Caco-2 (cell line): ENCODE measurements at regions of chr12 and their contacts with region 1.

Region 1: GRCh38 chr12:75990189-75990912 is 41.2 kb downstream of the PHLDA1 start:
- DNase-seq: peak in 1 of 2 experiments; percentile 77
- H3K4me3 ChIP-seq: no peak overlapping the region
- H3K4me3 Mint-ChIP-seq: peak overlapping the region; percentile 18
- H3K27ac Mint-ChIP-seq: peak overlapping the region; percentile 89
- H3K4me1 ChIP-seq: peaks cover 79% of the 10 kb centered on the region
- H3K4me1 Mint-ChIP-seq: peaks cover 46% of the 10 kb centered on the region
- H3K27me3 ChIP-seq: no peaks in the 10 kb centered on the region
- H3K27me3 Mint-ChIP-seq: no peaks in the 10 kb centered on the region
- CTCF ChIP-seq: no peak

Region 2: DNA sequence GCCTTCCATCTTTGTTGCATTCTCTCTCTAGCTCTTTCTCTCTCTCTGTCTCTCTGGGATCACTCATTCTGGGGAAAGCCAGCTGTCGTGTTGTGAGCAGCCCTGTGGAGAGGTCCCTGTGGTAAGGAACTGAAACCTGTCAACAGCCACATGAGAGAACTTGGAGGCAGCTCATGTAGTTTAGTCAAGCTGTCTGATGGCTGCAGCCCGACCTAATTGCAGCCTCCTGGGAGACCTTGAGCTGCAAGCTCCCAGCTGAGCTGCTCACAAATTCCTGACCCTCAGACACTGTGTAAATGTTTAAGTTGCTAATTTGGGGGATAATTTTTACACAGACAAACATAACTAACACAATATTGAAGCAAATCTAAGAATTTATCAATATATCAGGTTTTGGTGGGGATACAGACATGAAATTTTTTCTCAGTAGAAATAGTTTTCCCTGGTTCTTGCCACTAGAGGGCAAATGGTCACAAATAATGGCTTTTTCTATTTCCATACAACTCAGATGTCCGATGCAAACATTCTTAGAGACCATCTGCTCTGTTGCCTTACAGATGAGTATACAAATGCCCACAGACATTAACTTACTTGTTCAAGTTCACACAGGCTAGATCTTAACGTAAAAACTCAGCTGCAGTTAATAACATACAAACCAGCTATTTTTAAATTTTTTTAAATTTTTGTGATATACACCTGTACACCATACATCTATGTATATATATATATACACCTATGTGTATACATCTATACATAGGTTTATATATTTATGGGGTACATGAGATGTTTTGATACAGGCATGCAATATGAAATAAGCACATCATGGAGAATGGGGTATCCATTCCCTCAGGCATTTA is 463.5 kb before region 1 on chr12:
- CTCF ChIA-PET with region 1: no interaction called
- POLR2A ChIA-PET with region 1: no interaction called
- intact Hi-C with region 1: loop called (anchors 1 kb)
- DNase-seq: peak; percentile 28 to 37
- H3K4me3 ChIP-seq: no peak overlapping the region
- H3K4me3 Mint-ChIP-seq: no peak overlapping the region
- H3K27ac Mint-ChIP-seq: no peak overlapping the region
- H3K4me1 ChIP-seq: no peaks in the 10 kb centered on the region
- H3K4me1 Mint-ChIP-seq: peaks cover 17% of the 10 kb centered on the region
- H3K27me3 ChIP-seq: no peaks in the 10 kb centered on the region
- H3K27me3 Mint-ChIP-seq: peaks cover 2% of the 10 kb centered on the region
- CTCF ChIP-seq: peak; percentile 75 to 77

Region 3: DNA sequence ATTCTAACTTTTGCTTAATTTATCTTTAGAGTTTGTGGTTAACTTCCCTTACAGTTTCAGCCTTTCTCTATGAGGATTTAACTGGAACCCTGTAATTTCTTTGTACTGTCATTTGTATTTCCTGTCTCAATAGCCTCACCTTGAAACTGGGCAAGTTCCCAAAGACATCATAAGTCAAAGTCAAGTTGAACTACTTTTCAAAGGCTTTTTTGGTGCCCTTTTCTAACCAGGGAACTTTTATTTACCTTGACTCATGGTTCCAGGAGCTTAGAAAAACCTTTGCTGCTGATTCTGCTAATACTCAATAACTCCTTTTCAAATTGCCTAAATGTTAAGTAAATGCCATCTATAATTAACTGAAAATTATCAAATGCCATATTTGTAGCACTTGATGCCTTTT is 278.1 kb before region 1 on chr12:
- CTCF ChIA-PET with region 1: no interaction called
- POLR2A ChIA-PET with region 1: no interaction called
- intact Hi-C with region 1: loop called (anchors 1 kb)
- DNase-seq: no peak
- H3K4me3 ChIP-seq: no peak overlapping the region
- H3K4me3 Mint-ChIP-seq: no peak overlapping the region
- H3K27ac Mint-ChIP-seq: no peak overlapping the region
- H3K4me1 ChIP-seq: peaks cover 28% of the 10 kb centered on the region
- H3K4me1 Mint-ChIP-seq: peaks cover 33% of the 10 kb centered on the region
- H3K27me3 ChIP-seq: no peaks in the 10 kb centered on the region
- H3K27me3 Mint-ChIP-seq: no peaks in the 10 kb centered on the region
- CTCF ChIP-seq: no peak

Region 4: DNA sequence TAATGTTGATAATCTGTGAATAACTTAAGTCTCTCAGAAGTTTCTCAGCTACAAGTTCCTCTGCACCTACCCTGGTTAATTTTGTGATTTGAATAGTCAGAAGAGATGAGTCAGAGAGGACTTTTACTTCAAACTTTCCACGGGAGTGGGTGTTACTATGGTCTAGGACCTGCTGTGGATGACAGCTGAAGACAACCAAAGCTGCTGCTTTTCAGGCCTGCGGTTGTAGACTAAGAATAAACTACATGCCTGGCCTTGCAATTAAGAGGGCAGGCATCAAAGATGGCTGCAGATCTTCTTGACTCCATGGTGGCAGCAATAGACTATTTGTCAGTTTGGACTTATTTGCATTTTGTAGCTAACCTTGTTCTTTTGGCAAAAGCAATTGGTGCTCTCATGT is 251.9 kb before region 1 on chr12:
- CTCF ChIA-PET with region 1: no interaction called
- POLR2A ChIA-PET with region 1: no interaction called
- intact Hi-C with region 1: no loop called
- DNase-seq: no peak
- H3K4me3 ChIP-seq: no peak overlapping the region
- H3K4me3 Mint-ChIP-seq: no peak overlapping the region
- H3K27ac Mint-ChIP-seq: no peak overlapping the region
- H3K4me1 ChIP-seq: no peaks in the 10 kb centered on the region
- H3K4me1 Mint-ChIP-seq: peaks cover 19% of the 10 kb centered on the region
- H3K27me3 ChIP-seq: no peaks in the 10 kb centered on the region
- H3K27me3 Mint-ChIP-seq: no peaks in the 10 kb centered on the region
- CTCF ChIP-seq: no peak

Region 5: GRCh38 chr12:75877763-75878621 is 112.4 kb before region 1 on chr12:
- CTCF ChIA-PET with region 1: no interaction called
- POLR2A ChIA-PET with region 1: no interaction called
- intact Hi-C with region 1: loop called (anchors 1 kb)
- DNase-seq: no peak
- H3K4me3 ChIP-seq: no peak overlapping the region
- H3K4me3 Mint-ChIP-seq: no peak overlapping the region
- H3K27ac Mint-ChIP-seq: peak overlapping the region; percentile 79
- H3K4me1 ChIP-seq: peaks cover 38% of the 10 kb centered on the region
- H3K4me1 Mint-ChIP-seq: peaks cover 31% of the 10 kb centered on the region
- H3K27me3 ChIP-seq: no peaks in the 10 kb centered on the region
- H3K27me3 Mint-ChIP-seq: no peaks in the 10 kb centered on the region
- CTCF ChIP-seq: no peak

Region 6: GRCh38 chr12:75964150-75964549 is 26.2 kb before region 1 on chr12:
- CTCF ChIA-PET with region 1: no interaction called
- POLR2A ChIA-PET with region 1: no interaction called
- intact Hi-C with region 1: loop called (anchors 1 kb)
- DNase-seq: no peak
- H3K4me3 ChIP-seq: no peak overlapping the region
- H3K4me3 Mint-ChIP-seq: no peak overlapping the region
- H3K27ac Mint-ChIP-seq: peak overlapping the region; percentile 23
- H3K4me1 ChIP-seq: peaks cover 48% of the 10 kb centered on the region
- H3K4me1 Mint-ChIP-seq: peaks cover 52% of the 10 kb centered on the region
- H3K27me3 ChIP-seq: no peaks in the 10 kb centered on the region
- H3K27me3 Mint-ChIP-seq: no peaks in the 10 kb centered on the region
- CTCF ChIP-seq: no peak

Region 7: GRCh38 chr12:75977952-75978671 is 12.2 kb before region 1 on chr12:
- CTCF ChIA-PET with region 1: no interaction called
- POLR2A ChIA-PET with region 1: no interaction called
- intact Hi-C with region 1: loop called (anchors 1 kb)
- DNase-seq: peak; percentile 91 to 94
- H3K4me3 ChIP-seq: no peak overlapping the region
- H3K4me3 Mint-ChIP-seq: peak overlapping the region; percentile 63
- H3K27ac Mint-ChIP-seq: peak overlapping the region; percentile 92
- H3K4me1 ChIP-seq: peaks cover 68% of the 10 kb centered on the region
- H3K4me1 Mint-ChIP-seq: peaks cover 46% of the 10 kb centered on the region
- H3K27me3 ChIP-seq: no peaks in the 10 kb centered on the region
- H3K27me3 Mint-ChIP-seq: no peaks in the 10 kb centered on the region
- CTCF ChIP-seq: no peak

Region 8: GRCh38 chr12:76014007-76014406 is 23.7 kb after region 1 on chr12:
- CTCF ChIA-PET with region 1: no interaction called
- POLR2A ChIA-PET with region 1: interaction called, 3 read pairs
- intact Hi-C with region 1: loop called (anchors 1 kb)
- DNase-seq: peak; percentile 27 to 61
- H3K4me3 ChIP-seq: no peak overlapping the region
- H3K4me3 Mint-ChIP-seq: no peak overlapping the region
- H3K27ac Mint-ChIP-seq: peak overlapping the region; percentile 39
- H3K4me1 ChIP-seq: peaks cover 57% of the 10 kb centered on the region
- H3K4me1 Mint-ChIP-seq: peaks cover 57% of the 10 kb centered on the region
- H3K27me3 ChIP-seq: no peaks in the 10 kb centered on the region
- H3K27me3 Mint-ChIP-seq: no peaks in the 10 kb centered on the region
- CTCF ChIP-seq: no peak